CD4-positive, alpha-beta memory T cell (primary cell): ENCODE measurements at regions of chr1 and their contacts with region 1.

Region 1: DNA sequence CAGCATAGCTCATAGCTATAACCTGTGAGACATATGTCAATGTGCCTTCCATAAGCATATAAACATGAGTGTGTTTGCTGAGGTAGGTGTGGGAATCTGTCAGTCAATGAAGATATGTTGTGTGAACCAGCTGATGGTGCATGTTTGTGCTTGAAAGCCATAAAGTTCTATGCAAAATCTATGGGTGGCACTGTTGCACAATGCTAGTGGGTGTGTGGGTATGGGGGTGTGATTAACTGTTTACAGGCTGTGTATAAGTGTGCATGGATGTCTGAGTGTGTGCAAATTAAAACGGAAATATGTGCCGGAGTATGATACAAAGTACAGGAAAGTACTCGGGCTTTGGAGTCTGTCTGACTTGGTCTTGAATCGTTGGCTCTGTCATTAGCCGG is 1.0 kb upstream of the ATP2B4 start:
- DNase-seq: peak; percentile 84 to 91 (median 85)
- H3K4me3 ChIP-seq: peak overlapping the region; percentile 82 to 100
- H3K4me3 Mint-ChIP-seq: peak overlapping the region; percentile 95 to 100 (median 98)
- H3K27ac ChIP-seq: peak overlapping the region; percentile 84
- H3K27ac Mint-ChIP-seq: peak overlapping the region; percentile 83 to 97 (median 96)
- H3K4me1 ChIP-seq: peaks cover 32% of the 10 kb centered on the region
- H3K4me1 Mint-ChIP-seq: peaks cover 18 to 56% (median 24%) of the 10 kb centered on the region in 4 donors
- H3K27me3 ChIP-seq: no peaks in the 10 kb centered on the region
- H3K27me3 Mint-ChIP-seq: no peaks in the 10 kb centered on the region

Region 2: GRCh38 chr1:203381151-203381751 is 244.4 kb before region 1 on chr1:
- CTCF ChIA-PET with region 1: no interaction called
- POLR2A ChIA-PET with region 1: no interaction called
- intact Hi-C with region 1: no loop called
- DNase-seq: no peak
- H3K4me3 ChIP-seq: no peak overlapping the region
- H3K4me3 Mint-ChIP-seq: no peak overlapping the region
- H3K27ac ChIP-seq: no peak overlapping the region
- H3K27ac Mint-ChIP-seq: no peak overlapping the region
- H3K4me1 ChIP-seq: no peaks in the 10 kb centered on the region
- H3K4me1 Mint-ChIP-seq: no peaks in the 10 kb centered on the region
- H3K27me3 ChIP-seq: no peaks in the 10 kb centered on the region
- H3K27me3 Mint-ChIP-seq: peaks cover 15 to 23% of the 10 kb centered on the region in 2 donors

Region 3: GRCh38 chr1:203504397-203505250 is 121.0 kb before region 1 on chr1:
- CTCF ChIA-PET with region 1: interaction called, 28 read pairs
- POLR2A ChIA-PET with region 1: interaction called, 12 read pairs
- intact Hi-C with region 1: loop called (anchors 1 kb)
- DNase-seq: peak; percentile 60 to 70 (median 63)
- H3K4me3 ChIP-seq: no peak overlapping the region
- H3K4me3 Mint-ChIP-seq: no peak overlapping the region
- H3K27ac ChIP-seq: no peak overlapping the region
- H3K27ac Mint-ChIP-seq: peak overlapping the region in 1 of 7 donors; percentile 3
- H3K4me1 ChIP-seq: no peaks in the 10 kb centered on the region
- H3K4me1 Mint-ChIP-seq: peaks cover 0 to 7% (median 4%) of the 10 kb centered on the region in 4 donors
- H3K27me3 ChIP-seq: no peaks in the 10 kb centered on the region
- H3K27me3 Mint-ChIP-seq: no peaks in the 10 kb centered on the region

Region 4: DNA sequence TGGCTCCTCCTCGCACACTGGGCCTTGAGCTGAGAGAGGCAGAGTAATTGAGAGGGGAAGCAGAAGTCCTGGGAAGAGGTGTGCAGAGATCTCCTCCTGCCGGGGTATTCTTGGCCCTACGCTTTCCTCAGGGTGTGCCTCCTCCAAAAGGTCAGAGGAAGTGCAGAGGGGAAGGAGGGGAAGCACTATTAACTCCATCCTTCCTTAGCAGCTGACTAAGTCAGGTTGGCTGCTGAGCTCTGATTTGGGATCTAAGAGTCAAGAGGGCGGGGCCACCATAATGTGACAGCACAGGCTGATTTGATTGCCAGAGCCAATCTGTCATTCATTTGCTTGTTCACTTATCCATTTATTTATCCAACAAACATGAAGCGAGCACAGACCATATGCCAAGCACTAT is 13.3 kb after region 1 on chr1:
- CTCF ChIA-PET with region 1: interaction called, 33 read pairs
- POLR2A ChIA-PET with region 1: interaction called, 52 read pairs
- intact Hi-C with region 1: no loop called
- DNase-seq: no peak
- H3K4me3 ChIP-seq: no peak overlapping the region
- H3K4me3 Mint-ChIP-seq: peak overlapping the region in 7 of 8 donors; percentile 64 to 85 (median 73)
- H3K27ac ChIP-seq: peak overlapping the region; percentile 28
- H3K27ac Mint-ChIP-seq: peak overlapping the region; percentile 44 to 90 (median 84)
- H3K4me1 ChIP-seq: peaks cover 88% of the 10 kb centered on the region
- H3K4me1 Mint-ChIP-seq: peaks cover 63 to 89% (median 74%) of the 10 kb centered on the region in 4 donors
- H3K27me3 ChIP-seq: no peaks in the 10 kb centered on the region
- H3K27me3 Mint-ChIP-seq: no peaks in the 10 kb centered on the region

Region 5: DNA sequence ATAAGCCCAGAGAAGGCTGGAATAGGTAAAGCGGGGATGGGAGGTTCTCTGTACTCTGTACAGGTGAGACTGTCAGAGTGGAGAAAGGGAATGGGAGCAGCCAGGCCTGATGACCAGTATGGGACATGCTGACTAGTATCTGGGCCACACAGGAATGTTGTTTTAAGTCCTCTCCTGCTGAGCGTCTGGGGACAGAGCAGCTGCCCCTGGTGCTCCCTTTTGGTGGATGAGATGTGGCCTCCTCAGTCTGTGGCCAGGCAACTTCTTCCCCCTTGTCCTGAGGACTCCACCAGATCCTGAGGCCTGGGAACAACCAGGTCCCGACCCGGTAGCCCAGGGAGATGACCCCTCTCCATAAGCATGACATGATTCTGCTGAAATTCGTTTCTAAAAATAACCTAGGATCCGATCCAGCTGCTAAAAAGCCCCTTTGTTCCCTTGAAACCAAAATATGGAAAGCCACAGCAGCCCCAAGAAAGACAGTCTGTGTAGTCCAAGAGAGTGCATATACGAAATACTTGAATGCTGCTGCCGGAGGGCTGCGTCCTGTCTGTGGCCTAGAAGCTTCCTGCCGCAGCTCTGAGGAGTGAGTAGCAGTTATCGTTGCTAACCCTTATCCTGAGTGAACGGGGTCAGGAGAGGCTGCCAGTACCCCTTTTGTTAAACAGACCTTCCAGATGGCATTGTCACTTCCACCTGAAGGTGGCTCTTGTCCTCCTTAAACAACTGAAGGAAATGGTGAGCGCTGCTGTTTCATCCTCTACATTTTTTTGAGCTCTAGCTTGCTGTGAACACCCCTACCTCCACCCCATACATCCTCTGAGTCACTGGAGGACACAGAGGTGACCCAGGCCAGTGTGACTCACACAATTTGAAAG is 48.2 kb after region 1 on chr1:
- CTCF ChIA-PET with region 1: interaction called, 68 read pairs
- POLR2A ChIA-PET with region 1: interaction called, 166 read pairs
- intact Hi-C with region 1: loop called (anchors 1 kb)
- DNase-seq: peak; percentile 84 to 94 (median 88)
- H3K4me3 ChIP-seq: peak overlapping the region in 1 of 2 donors; percentile 30
- H3K4me3 Mint-ChIP-seq: peak overlapping the region; percentile 78 to 93 (median 84)
- H3K27ac ChIP-seq: peak overlapping the region; percentile 65
- H3K27ac Mint-ChIP-seq: peak overlapping the region; percentile 93 to 99 (median 98)
- H3K4me1 ChIP-seq: peaks cover 82% of the 10 kb centered on the region
- H3K4me1 Mint-ChIP-seq: peaks cover 56 to 92% (median 77%) of the 10 kb centered on the region in 4 donors
- H3K27me3 ChIP-seq: no peaks in the 10 kb centered on the region
- H3K27me3 Mint-ChIP-seq: no peaks in the 10 kb centered on the region

Region 6: GRCh38 chr1:203769505-203770343 is 144.1 kb after region 1 on chr1:
- CTCF ChIA-PET with region 1: interaction called, 12 read pairs
- POLR2A ChIA-PET with region 1: interaction called, 39 read pairs
- intact Hi-C with region 1: loop called (anchors 1 kb)
- DNase-seq: no peak
- H3K4me3 ChIP-seq: no peak overlapping the region
- H3K4me3 Mint-ChIP-seq: peak overlapping the region in 6 of 8 donors; percentile 40 to 62 (median 47)
- H3K27ac ChIP-seq: no peak overlapping the region
- H3K27ac Mint-ChIP-seq: peak overlapping the region; percentile 41 to 97 (median 84)
- H3K4me1 ChIP-seq: peaks cover 26% of the 10 kb centered on the region
- H3K4me1 Mint-ChIP-seq: peaks cover 22 to 56% (median 36%) of the 10 kb centered on the region in 4 donors
- H3K27me3 ChIP-seq: no peaks in the 10 kb centered on the region
- H3K27me3 Mint-ChIP-seq: no peaks in the 10 kb centered on the region